CD4-positive, alpha-beta memory T cell (primary cell): ENCODE measurements at regions of chr10 and their contacts with region 1.

Region 1: GRCh38 chr10:47311932-47312662 is 10.2 kb upstream of the GDF2 start:
- DNase-seq: peak; percentile 75 to 84 (median 79)
- H3K4me3 ChIP-seq: no peak overlapping the region
- H3K4me3 Mint-ChIP-seq: peak overlapping the region; percentile 48 to 80 (median 68)
- H3K27ac ChIP-seq: peak overlapping the region; percentile 27
- H3K27ac Mint-ChIP-seq: peak overlapping the region; percentile 81 to 87 (median 84)
- H3K4me1 ChIP-seq: peaks cover 32% of the 10 kb centered on the region
- H3K4me1 Mint-ChIP-seq: peaks cover 17 to 37% (median 27%) of the 10 kb centered on the region in 4 donors
- H3K27me3 ChIP-seq: no peaks in the 10 kb centered on the region
- H3K27me3 Mint-ChIP-seq: no peaks in the 10 kb centered on the region

Region 2: DNA sequence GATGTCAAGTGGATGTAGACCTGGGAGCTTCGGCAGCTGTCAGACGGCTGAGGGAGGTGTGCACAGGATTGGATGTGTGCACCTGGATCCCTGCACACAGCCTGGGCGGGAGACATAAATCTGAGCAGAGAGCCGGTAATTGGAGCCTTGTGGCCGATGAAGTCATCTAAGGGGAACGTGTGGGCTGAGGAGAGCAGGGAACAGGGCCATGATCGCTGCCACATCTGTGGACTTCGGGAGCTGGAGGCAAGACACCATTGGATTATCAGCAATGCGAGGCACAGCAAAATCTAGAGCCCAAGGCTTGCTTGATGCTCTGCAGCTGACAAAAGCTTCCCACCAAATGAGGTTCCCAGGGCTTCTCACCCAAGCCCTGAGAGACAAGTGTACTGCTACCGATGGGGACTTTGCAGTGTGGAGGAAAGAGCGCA is 253.1 kb before region 1 on chr10:
- CTCF ChIA-PET with region 1: interaction called, 11 read pairs
- POLR2A ChIA-PET with region 1: no interaction called
- intact Hi-C with region 1: no loop called
- DNase-seq: no peak
- H3K4me3 ChIP-seq: no peak overlapping the region
- H3K4me3 Mint-ChIP-seq: no peak overlapping the region
- H3K27ac ChIP-seq: no peak overlapping the region
- H3K27ac Mint-ChIP-seq: no peak overlapping the region
- H3K4me1 ChIP-seq: no peaks in the 10 kb centered on the region
- H3K4me1 Mint-ChIP-seq: peaks cover 0 to 2% (median 0%) of the 10 kb centered on the region in 4 donors
- H3K27me3 ChIP-seq: no peaks in the 10 kb centered on the region
- H3K27me3 Mint-ChIP-seq: peaks cover 0 to 8% of the 10 kb centered on the region in 2 donors

Region 3: GRCh38 chr10:47146572-47146971 is 165.5 kb before region 1 on chr10:
- CTCF ChIA-PET with region 1: no interaction called
- POLR2A ChIA-PET with region 1: no interaction called
- intact Hi-C with region 1: no loop called
- DNase-seq: no peak
- H3K4me3 ChIP-seq: no peak overlapping the region
- H3K4me3 Mint-ChIP-seq: no peak overlapping the region
- H3K27ac ChIP-seq: no peak overlapping the region
- H3K27ac Mint-ChIP-seq: no peak overlapping the region
- H3K4me1 ChIP-seq: no peaks in the 10 kb centered on the region
- H3K4me1 Mint-ChIP-seq: no peaks in the 10 kb centered on the region
- H3K27me3 ChIP-seq: no peaks in the 10 kb centered on the region
- H3K27me3 Mint-ChIP-seq: peaks cover 0 to 1% of the 10 kb centered on the region in 2 donors

Region 4: GRCh38 chr10:47207281-47207615 is 104.8 kb before region 1 on chr10:
- CTCF ChIA-PET with region 1: interaction called, 12 read pairs
- POLR2A ChIA-PET with region 1: interaction called, 12 read pairs
- intact Hi-C with region 1: loop called (anchors 2 kb)
- DNase-seq: peak in 2 of 5 donors; percentile 7 to 28
- H3K4me3 ChIP-seq: peak overlapping the region in 1 of 2 donors; percentile 36
- H3K4me3 Mint-ChIP-seq: peak overlapping the region; percentile 61 to 82 (median 78)
- H3K27ac ChIP-seq: peak overlapping the region; percentile 22
- H3K27ac Mint-ChIP-seq: peak overlapping the region; percentile 77 to 94 (median 91)
- H3K4me1 ChIP-seq: peaks cover 60% of the 10 kb centered on the region
- H3K4me1 Mint-ChIP-seq: peaks cover 39 to 72% (median 64%) of the 10 kb centered on the region in 4 donors
- H3K27me3 ChIP-seq: no peaks in the 10 kb centered on the region
- H3K27me3 Mint-ChIP-seq: no peaks in the 10 kb centered on the region

Region 5: DNA sequence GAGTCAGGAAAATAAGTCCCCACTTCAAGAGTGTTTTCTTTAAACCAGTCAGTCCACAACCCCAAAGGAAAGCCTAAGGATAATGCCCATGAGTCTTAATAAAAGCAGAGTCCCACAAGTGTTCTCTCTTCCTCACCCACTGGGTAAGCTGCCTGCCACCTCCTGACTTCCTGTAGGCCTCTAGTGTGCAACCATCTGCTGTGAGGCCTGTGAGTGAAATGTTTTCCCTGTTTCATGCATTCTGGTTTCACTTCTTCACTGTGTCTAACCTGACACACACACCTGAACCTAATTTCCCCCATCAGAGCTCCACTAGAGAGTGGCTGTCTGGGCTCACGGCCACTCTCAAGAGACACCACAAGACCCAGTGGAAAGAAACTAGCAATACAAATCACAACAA is 51.0 kb before region 1 on chr10:
- CTCF ChIA-PET with region 1: interaction called, 21 read pairs
- POLR2A ChIA-PET with region 1: interaction called, 26 read pairs
- intact Hi-C with region 1: loop called (anchors 2 kb)
- DNase-seq: peak; percentile 38 to 53 (median 43)
- H3K4me3 ChIP-seq: no peak overlapping the region
- H3K4me3 Mint-ChIP-seq: peak overlapping the region; percentile 34 to 83 (median 76)
- H3K27ac ChIP-seq: peak overlapping the region; percentile 51
- H3K27ac Mint-ChIP-seq: peak overlapping the region; percentile 78 to 99 (median 96)
- H3K4me1 ChIP-seq: peaks cover 90% of the 10 kb centered on the region
- H3K4me1 Mint-ChIP-seq: peaks cover 48 to 93% (median 82%) of the 10 kb centered on the region in 4 donors
- H3K27me3 ChIP-seq: no peaks in the 10 kb centered on the region
- H3K27me3 Mint-ChIP-seq: no peaks in the 10 kb centered on the region

Region 6: DNA sequence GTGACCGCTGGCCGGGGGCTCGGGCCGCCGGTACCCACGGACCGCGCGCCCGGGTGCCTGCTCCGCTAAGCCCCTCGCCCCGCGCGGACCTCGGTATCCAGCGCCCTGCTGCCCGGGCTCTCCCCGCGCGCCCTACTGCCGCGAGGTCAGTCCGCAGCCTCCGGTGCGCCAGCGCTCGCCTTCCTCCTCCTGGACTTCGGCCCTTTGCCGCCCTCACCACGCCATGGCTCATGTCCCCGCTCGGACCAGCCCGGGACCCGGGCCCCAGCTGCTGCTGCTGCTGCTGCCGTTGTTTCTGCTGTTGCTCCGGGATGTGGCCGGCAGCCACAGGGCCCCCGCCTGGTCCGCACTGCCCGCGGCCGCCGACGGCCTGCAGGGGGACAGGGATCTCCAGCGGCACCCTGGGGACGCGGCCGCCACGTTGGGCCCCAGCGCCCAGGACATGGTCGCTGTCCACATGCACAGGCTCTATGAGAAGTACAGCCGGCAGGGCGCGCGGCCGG is 11.6 kb before region 1 on chr10:
- CTCF ChIA-PET with region 1: interaction called, 10 read pairs
- POLR2A ChIA-PET with region 1: interaction called, 4 read pairs
- intact Hi-C with region 1: loop called (anchors 1 kb)
- DNase-seq: no peak
- H3K4me3 ChIP-seq: peak overlapping the region in 1 of 2 donors; percentile 35
- H3K4me3 Mint-ChIP-seq: peak overlapping the region; percentile 69 to 87 (median 79)
- H3K27ac ChIP-seq: no peak overlapping the region
- H3K27ac Mint-ChIP-seq: no peak overlapping the region
- H3K4me1 ChIP-seq: peaks cover 12% of the 10 kb centered on the region
- H3K4me1 Mint-ChIP-seq: peaks cover 9 to 23% (median 19%) of the 10 kb centered on the region in 4 donors
- H3K27me3 ChIP-seq: no peaks in the 10 kb centered on the region
- H3K27me3 Mint-ChIP-seq: peaks cover 3 to 15% of the 10 kb centered on the region in 2 donors

Region 7: GRCh38 chr10:47458466-47459154 is 146.5 kb after region 1 on chr10:
- CTCF ChIA-PET with region 1: no interaction called
- POLR2A ChIA-PET with region 1: no interaction called
- intact Hi-C with region 1: no loop called
- DNase-seq: no peak
- H3K4me3 ChIP-seq: no peak overlapping the region
- H3K4me3 Mint-ChIP-seq: no peak overlapping the region
- H3K27ac ChIP-seq: no peak overlapping the region
- H3K27ac Mint-ChIP-seq: no peak overlapping the region
- H3K4me1 ChIP-seq: no peaks in the 10 kb centered on the region
- H3K4me1 Mint-ChIP-seq: peaks cover 0 to 1% (median 0%) of the 10 kb centered on the region in 4 donors
- H3K27me3 ChIP-seq: no peaks in the 10 kb centered on the region
- H3K27me3 Mint-ChIP-seq: peaks cover 3 to 12% of the 10 kb centered on the region in 2 donors